A549 (cell line): ENCODE measurements at regions of chr20 and their contacts with region 1.

Region 1: GRCh38 chr20:63309261-63310071 is 16.5 kb downstream of the COL20A1 start:
- DNase-seq: peak; percentile 45 to 58
- ATAC-seq: peak; percentile 55 to 86; a peak in 5 of 6 replicates
- H3K4me3 ChIP-seq: no peak overlapping the region
- H3K27ac ChIP-seq: no peak overlapping the region
- H3K4me1 ChIP-seq: 0 out of 3 replicates have a peak, but pooled peaks cover 3% of the 10 kb centered on the region
- CTCF ChIP-seq: peak; percentile 72
- EP300 ChIP-seq: no peak
- POLR2A ChIP-seq: no peak
- RAD21 ChIP-seq: peak; percentile 71 to 73

Region 2: GRCh38 chr20:63258781-63259180 is 50.7 kb before region 1 on chr20:
- CTCF ChIA-PET with region 1: no interaction called
- POLR2A ChIA-PET with region 1: no interaction called
- DNase-seq: no peak
- ATAC-seq: 0 out of 6 replicates have a peak, but pooled peaks of 1 of the 2 experiments have one; percentile 6
- H3K4me3 ChIP-seq: no peak overlapping the region
- H3K27ac ChIP-seq: 0 out of 6 replicates have a peak overlapping the region, but pooled peaks of 1 of the 2 experiments have one; percentile 25
- H3K4me1 ChIP-seq: peaks cover 25% of the 10 kb centered on the region
- CTCF ChIP-seq: no peak
- EP300 ChIP-seq: no peak
- POLR2A ChIP-seq: no peak
- RAD21 ChIP-seq: no peak

Region 3: DNA sequence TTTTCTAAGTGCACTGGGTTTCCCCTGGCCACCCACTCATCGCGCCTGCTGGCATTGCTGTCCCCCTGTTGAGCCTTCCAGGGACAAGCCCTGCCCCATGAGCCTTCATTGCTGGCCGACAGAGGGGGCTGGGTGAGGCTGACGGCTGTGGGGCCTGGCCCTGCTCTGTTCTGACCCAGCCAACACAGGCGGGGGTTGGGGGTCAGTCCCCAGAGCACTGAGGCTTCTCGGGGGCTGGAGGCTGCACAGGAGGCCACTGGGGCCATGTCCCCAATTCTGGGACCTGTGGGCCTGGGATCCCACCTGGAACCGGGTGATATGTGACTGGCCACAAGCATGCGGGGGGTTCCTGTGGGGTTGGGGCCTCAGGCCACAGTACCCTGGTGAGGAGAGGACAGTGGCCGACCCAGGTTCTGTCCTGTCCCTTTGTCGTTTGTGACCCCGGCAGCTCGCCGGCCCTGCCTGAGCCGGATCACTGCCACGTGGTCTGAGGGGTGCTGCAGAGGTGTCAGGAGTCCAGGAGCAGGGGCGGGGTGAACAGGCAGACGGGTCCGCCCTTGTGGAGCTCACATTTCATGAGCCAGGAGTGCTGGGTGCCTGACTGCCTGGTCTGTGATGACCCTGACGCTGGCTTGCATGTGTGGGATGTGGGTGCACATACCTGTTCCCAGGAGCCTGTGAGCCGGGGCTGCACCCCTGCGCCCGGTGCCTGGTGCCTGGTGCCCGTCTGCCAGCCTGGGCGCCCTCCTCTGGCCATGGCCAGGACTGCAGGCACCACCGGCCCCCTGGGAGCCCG is 18.6 kb before region 1 on chr20:
- CTCF ChIA-PET with region 1: interaction called, 55 read pairs
- POLR2A ChIA-PET with region 1: no interaction called
- DNase-seq: peak; percentile 51 to 75
- ATAC-seq: peak; percentile 35 to 75
- H3K4me3 ChIP-seq: no peak overlapping the region
- H3K27ac ChIP-seq: peak overlapping the region in 1 of 2 experiments; percentile 29; a peak in 2 of 6 replicates
- H3K4me1 ChIP-seq: peaks cover 23% of the 10 kb centered on the region; the same call in 2 of the 3 replicates
- CTCF ChIP-seq: peak; percentile 52
- EP300 ChIP-seq: no peak
- POLR2A ChIP-seq: no peak
- RAD21 ChIP-seq: peak; percentile 42 to 45; a peak in 3 of 5 replicates

Region 4: DNA sequence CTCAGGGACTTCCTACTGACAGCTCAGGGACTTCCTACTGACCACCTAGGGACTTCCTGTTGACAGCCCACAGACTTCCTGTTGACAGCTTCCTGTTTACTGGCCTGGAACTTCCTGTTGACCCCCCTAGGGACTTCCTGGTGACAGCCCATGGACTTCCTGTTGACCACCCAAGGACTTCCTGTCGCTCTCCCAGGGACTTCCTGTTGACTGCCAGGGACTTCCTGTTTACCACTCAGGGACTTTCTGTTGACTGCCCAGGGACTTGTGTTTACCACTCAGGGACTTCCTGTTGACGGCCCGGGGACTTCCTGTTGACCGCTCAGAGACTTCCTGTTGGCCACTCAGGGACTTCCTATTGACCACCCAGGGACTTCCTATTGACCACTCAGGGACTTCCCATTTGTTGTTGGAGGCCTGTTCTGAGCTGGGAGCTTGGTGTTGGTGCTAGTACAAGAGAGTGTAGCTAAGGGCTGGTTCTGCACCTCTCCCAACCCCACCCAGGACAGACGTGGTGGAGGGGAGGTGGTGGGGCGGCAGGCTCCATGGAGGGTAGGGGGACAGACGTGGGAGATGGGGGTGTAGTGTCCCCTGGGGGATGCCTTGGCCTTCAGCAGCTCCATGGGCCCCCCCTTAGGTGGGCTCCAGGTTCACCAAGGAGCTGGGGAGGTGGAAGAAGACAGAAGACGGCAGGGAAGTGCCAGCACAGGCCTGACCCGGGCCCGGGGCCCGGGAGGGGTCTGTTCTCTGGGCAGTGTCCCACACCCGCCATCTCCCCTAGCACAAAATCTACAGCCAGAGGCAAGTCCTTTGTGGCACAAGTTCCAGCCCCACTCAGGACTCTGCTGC is 17.7 kb after region 1 on chr20:
- CTCF ChIA-PET with region 1: interaction called, 20 read pairs
- POLR2A ChIA-PET with region 1: no interaction called
- DNase-seq: no peak
- ATAC-seq: no peak
- H3K4me3 ChIP-seq: no peak overlapping the region
- H3K27ac ChIP-seq: peak overlapping the region in 1 of 2 experiments; percentile 27; a peak in 1 of 6 replicates
- H3K4me1 ChIP-seq: no peaks in the 10 kb centered on the region
- CTCF ChIP-seq: no peak
- EP300 ChIP-seq: no peak
- POLR2A ChIP-seq: no peak
- RAD21 ChIP-seq: no peak

Region 5: DNA sequence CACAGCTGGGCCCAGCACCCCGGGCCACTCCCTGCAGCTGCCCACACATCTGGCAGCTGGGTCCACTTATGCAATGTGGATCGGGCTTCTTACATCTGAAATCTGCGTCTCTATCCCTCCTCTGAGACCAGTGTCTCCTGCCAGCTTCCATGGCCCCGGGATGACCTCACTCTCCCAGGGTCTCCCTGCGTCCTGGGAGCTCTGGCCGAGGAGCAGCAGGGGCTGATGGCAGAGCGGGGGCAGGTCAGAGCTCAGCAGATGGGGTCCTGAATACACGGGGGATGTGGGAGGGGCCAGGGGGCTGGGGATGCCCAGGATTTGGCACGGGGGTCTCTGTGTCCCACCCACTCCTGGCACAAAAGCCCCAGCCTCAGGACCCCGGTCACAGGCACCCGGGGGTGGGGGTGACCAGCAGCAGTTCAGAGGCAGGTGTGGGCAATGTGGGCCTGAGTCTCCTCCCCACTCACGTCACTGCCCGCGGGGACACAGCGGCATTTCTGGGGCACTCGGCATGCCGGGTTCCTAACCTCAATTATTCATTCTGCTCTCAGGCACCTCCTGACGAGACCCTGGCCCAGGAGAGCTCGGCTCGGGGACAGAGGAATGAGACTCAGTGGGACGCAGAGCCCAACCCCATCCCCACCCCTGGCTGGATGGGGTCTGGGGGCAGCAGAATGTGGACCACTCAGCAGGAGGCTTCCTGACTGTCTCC is 35.3 kb after region 1 on chr20:
- CTCF ChIA-PET with region 1: interaction called, 10 read pairs
- POLR2A ChIA-PET with region 1: no interaction called
- DNase-seq: no peak
- ATAC-seq: no peak
- H3K4me3 ChIP-seq: no peak overlapping the region
- H3K27ac ChIP-seq: no peak overlapping the region
- H3K4me1 ChIP-seq: no peaks in the 10 kb centered on the region
- CTCF ChIP-seq: no peak
- EP300 ChIP-seq: no peak
- POLR2A ChIP-seq: no peak
- RAD21 ChIP-seq: no peak

Region 6: GRCh38 chr20:63381807-63382322 is 72.4 kb after region 1 on chr20:
- CTCF ChIA-PET with region 1: interaction called, 139 read pairs
- POLR2A ChIA-PET with region 1: no interaction called
- DNase-seq: peak in 1 of 2 experiments; percentile 59
- ATAC-seq: peak in 1 of 2 experiments; percentile 70; a peak in 3 of 6 replicates
- H3K4me3 ChIP-seq: no peak overlapping the region
- H3K27ac ChIP-seq: no peak overlapping the region
- H3K4me1 ChIP-seq: no peaks in the 10 kb centered on the region
- CTCF ChIP-seq: peak; percentile 88
- EP300 ChIP-seq: no peak
- POLR2A ChIP-seq: no peak
- RAD21 ChIP-seq: peak; percentile 91 to 92

Region 7: GRCh38 chr20:63973636-63974402 is 664.4 kb after region 1 on chr20:
- CTCF ChIA-PET with region 1: interaction called, 11 read pairs
- POLR2A ChIA-PET with region 1: no interaction called
- DNase-seq: peak; percentile 86 to 87
- ATAC-seq: peak; percentile 67 to 92
- H3K4me3 ChIP-seq: peak overlapping the region; percentile 46
- H3K27ac ChIP-seq: peak overlapping the region; percentile 80 to 83
- H3K4me1 ChIP-seq: peaks cover 42% of the 10 kb centered on the region
- CTCF ChIP-seq: peak; percentile 97
- EP300 ChIP-seq: no peak
- POLR2A ChIP-seq: peak; percentile 56
- RAD21 ChIP-seq: peak; percentile 93 to 94